ENCODE measurements at regions of chr2 and their contacts with region 1.

Region 1: GRCh38 chr2:136384531-136385303 is 266.8 kb upstream of the CXCR4 start:
- DNase-seq: peak; percentile 82
- ATAC-seq: peak; percentile 50
- H3K4me3 ChIP-seq: no peak overlapping the region
- H3K4me3 Mint-ChIP-seq: peak overlapping the region; percentile 44
- H3K27ac ChIP-seq: peak overlapping the region in 1 of 2 donors; percentile 11
- H3K27ac Mint-ChIP-seq: peak overlapping the region; percentile 76
- H3K4me1 ChIP-seq: peaks cover 30 to 42% of the 10 kb centered on the region in 2 donors
- H3K4me1 Mint-ChIP-seq: peaks cover 55% of the 10 kb centered on the region
- H3K27me3 ChIP-seq: no peaks in the 10 kb centered on the region
- H3K27me3 Mint-ChIP-seq: no peaks in the 10 kb centered on the region
- CTCF ChIP-seq: peak; percentile 87

Region 2: DNA sequence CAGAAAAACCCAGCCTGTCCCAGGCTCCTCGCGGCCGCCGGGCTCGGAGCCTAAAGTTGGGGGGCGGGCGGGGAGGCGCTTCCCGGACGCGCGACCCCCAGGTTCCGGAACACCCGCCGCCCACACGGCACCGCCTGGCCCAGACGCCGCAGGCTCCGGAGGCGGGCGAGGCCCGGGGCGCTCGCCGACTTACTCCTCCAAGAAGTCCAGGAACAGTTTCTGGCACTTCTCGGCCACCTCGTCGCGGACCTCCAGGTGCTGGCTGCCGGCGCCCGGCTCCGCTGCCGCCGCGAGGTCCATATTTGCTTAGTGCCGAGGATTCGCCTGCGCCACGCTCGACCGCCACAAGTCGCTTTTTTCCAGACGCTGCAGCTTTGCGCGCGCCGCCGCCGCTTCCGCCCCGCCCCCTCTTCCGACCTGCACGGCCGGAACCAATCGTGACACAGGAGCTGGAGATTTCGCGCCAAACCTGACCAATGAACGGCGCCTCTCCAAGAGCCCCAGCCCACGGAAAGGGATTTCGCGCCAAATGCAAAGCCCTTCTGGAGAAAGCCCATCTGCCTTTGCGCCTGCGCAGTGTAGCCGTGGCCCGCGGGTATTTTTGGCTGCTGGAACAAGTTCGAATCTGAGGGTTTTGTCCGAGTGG is 508.5 kb before region 1 on chr2 and contains the start of gene MCM6:
- CTCF ChIA-PET with region 1: interaction called, 3 read pairs
- POLR2A ChIA-PET with region 1: no interaction called
- intact Hi-C with region 1: loop called (anchors 1 kb)
- DNase-seq: peak; percentile 96
- ATAC-seq: peak; percentile 92
- H3K4me3 ChIP-seq: peak within 1 kb of the TSS; percentile 68 to 80 (median 76)
- H3K4me3 Mint-ChIP-seq: peak within 1 kb of the TSS; percentile 95
- H3K27ac ChIP-seq: peak within 1 kb of the TSS; percentile 69 to 79
- H3K27ac Mint-ChIP-seq: peak within 1 kb of the TSS; percentile 94
- H3K4me1 ChIP-seq: peaks cover 8 to 23% of the 10 kb centered on the region in 2 donors
- H3K4me1 Mint-ChIP-seq: peaks cover 24% of the 10 kb centered on the region
- H3K27me3 ChIP-seq: no peaks in the 10 kb centered on the region
- H3K27me3 Mint-ChIP-seq: no peaks in the 10 kb centered on the region
- CTCF ChIP-seq: no peak
- total RNA-seq, gene MCM6: 29.6 and 30.0 TPM in 2 replicates

Region 3: GRCh38 chr2:135985018-135985825 is 399.5 kb before region 1 on chr2 and contains the start of gene DARS1:
- CTCF ChIA-PET with region 1: interaction called, 15 read pairs
- POLR2A ChIA-PET with region 1: interaction called, 7 read pairs
- intact Hi-C with region 1: loop called (anchors 2 kb)
- DNase-seq: peak; percentile 91
- ATAC-seq: peak; percentile 84
- H3K4me3 ChIP-seq: peak within 1 kb of the TSS; percentile 75 to 99 (median 93)
- H3K4me3 Mint-ChIP-seq: peak within 1 kb of the TSS; percentile 97
- H3K27ac ChIP-seq: peak within 1 kb of the TSS; percentile 94 to 97
- H3K27ac Mint-ChIP-seq: peak within 1 kb of the TSS; percentile 98
- H3K4me1 ChIP-seq: peaks cover 29 to 31% of the 10 kb centered on the region in 2 donors
- H3K4me1 Mint-ChIP-seq: peaks cover 50% of the 10 kb centered on the region
- H3K27me3 ChIP-seq: no peaks in the 10 kb centered on the region
- H3K27me3 Mint-ChIP-seq: no peaks in the 10 kb centered on the region
- CTCF ChIP-seq: no peak
- total RNA-seq, gene DARS1: 88.3 and 92.0 TPM in 2 replicates

Region 4: GRCh38 chr2:136025057-136025973 is 359.4 kb before region 1 on chr2:
- CTCF ChIA-PET with region 1: no interaction called
- POLR2A ChIA-PET with region 1: no interaction called
- intact Hi-C with region 1: no loop called
- DNase-seq: peak; percentile 52
- ATAC-seq: peak; percentile 76
- H3K4me3 ChIP-seq: peak overlapping the region in 1 of 5 experiments; percentile 16
- H3K4me3 Mint-ChIP-seq: peak overlapping the region; percentile 27
- H3K27ac ChIP-seq: no peak overlapping the region
- H3K27ac Mint-ChIP-seq: no peak overlapping the region
- H3K4me1 ChIP-seq: peaks cover 5 to 11% of the 10 kb centered on the region in 2 donors
- H3K4me1 Mint-ChIP-seq: peaks cover 24% of the 10 kb centered on the region
- H3K27me3 ChIP-seq: no peaks in the 10 kb centered on the region
- H3K27me3 Mint-ChIP-seq: no peaks in the 10 kb centered on the region
- CTCF ChIP-seq: no peak

Region 5: DNA sequence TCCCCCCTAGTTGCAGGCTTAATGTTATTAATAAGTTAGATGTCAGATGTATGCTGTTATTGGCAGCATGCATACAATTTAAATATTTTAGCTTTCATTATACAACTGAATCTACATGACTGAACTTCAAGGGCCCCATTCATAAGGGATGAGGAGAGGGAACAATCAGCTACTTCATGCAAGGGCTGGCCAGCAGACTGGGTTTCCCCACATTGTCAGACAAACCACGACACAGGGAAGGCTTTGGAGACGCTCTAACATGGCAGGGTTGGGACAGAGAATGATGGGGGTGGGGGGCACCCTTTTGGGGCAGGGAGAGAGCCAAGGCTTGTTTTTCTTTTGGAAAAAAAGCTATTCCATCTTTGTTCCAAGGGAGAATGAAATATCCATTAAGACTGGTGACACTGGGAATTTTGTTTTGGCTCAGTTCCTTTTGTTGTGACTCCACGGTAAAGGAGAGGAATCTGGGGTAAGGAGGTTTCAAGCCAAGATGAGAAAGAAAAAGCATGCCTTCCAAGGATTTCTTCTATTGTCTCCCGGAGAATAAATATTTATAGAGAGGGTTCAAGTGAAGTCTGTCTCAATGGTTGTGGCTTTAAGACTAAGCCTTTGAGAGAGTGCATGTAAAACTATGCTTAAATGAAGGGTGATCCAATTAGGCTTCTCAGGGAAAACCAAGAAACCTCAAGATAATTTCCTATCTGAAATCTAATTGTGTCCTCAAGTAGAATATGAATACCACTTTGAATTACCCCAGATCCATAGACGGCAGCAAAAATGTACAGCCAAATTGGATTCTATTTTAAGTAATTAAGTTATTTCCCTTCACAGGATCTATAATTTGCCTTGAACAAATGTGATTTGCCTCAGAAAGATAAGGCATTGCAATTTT is 272.2 kb before region 1 on chr2:
- CTCF ChIA-PET with region 1: interaction called, 17 read pairs
- POLR2A ChIA-PET with region 1: interaction called, 47 read pairs
- intact Hi-C with region 1: no loop called
- DNase-seq: peak; percentile 48
- ATAC-seq: no peak
- H3K4me3 ChIP-seq: no peak overlapping the region
- H3K4me3 Mint-ChIP-seq: peak overlapping the region; percentile 98
- H3K27ac ChIP-seq: no peak overlapping the region
- H3K27ac Mint-ChIP-seq: peak overlapping the region; percentile 69
- H3K4me1 ChIP-seq: peaks cover 70 to 72% of the 10 kb centered on the region in 2 donors
- H3K4me1 Mint-ChIP-seq: peaks cover 74% of the 10 kb centered on the region
- H3K27me3 ChIP-seq: no peaks in the 10 kb centered on the region
- H3K27me3 Mint-ChIP-seq: no peaks in the 10 kb centered on the region
- CTCF ChIP-seq: no peak

Region 6: GRCh38 chr2:136135921-136136906 is 248.5 kb before region 1 on chr2:
- CTCF ChIA-PET with region 1: interaction called, 13 read pairs
- POLR2A ChIA-PET with region 1: interaction called, 40 read pairs
- intact Hi-C with region 1: loop called (anchors 1 kb)
- DNase-seq: peak; percentile 94
- ATAC-seq: peak; percentile 50
- H3K4me3 ChIP-seq: peak overlapping the region in 3 of 5 experiments; percentile 10 to 33 (median 10)
- H3K4me3 Mint-ChIP-seq: peak overlapping the region; percentile 83
- H3K27ac ChIP-seq: peak overlapping the region; percentile 98 to 99
- H3K27ac Mint-ChIP-seq: peak overlapping the region; percentile 96
- H3K4me1 ChIP-seq: peaks cover 94 to 98% of the 10 kb centered on the region in 2 donors
- H3K4me1 Mint-ChIP-seq: peaks cover 92% of the 10 kb centered on the region
- H3K27me3 ChIP-seq: no peaks in the 10 kb centered on the region
- H3K27me3 Mint-ChIP-seq: no peaks in the 10 kb centered on the region
- CTCF ChIP-seq: no peak

Region 7: GRCh38 chr2:136238286-136239078 is 146.2 kb before region 1 on chr2:
- CTCF ChIA-PET with region 1: interaction called, 169 read pairs
- POLR2A ChIA-PET with region 1: interaction called, 33 read pairs
- intact Hi-C with region 1: loop called (anchors 1 kb)
- DNase-seq: peak; percentile 93
- ATAC-seq: peak; percentile 70
- H3K4me3 ChIP-seq: peak overlapping the region in 1 of 5 experiments; percentile 17
- H3K4me3 Mint-ChIP-seq: peak overlapping the region; percentile 23
- H3K27ac ChIP-seq: peak overlapping the region; percentile 98
- H3K27ac Mint-ChIP-seq: peak overlapping the region; percentile 87
- H3K4me1 ChIP-seq: peaks cover 66 to 74% of the 10 kb centered on the region in 2 donors
- H3K4me1 Mint-ChIP-seq: peaks cover 85% of the 10 kb centered on the region
- H3K27me3 ChIP-seq: no peaks in the 10 kb centered on the region
- H3K27me3 Mint-ChIP-seq: no peaks in the 10 kb centered on the region
- CTCF ChIP-seq: no peak

Measured in B cell (primary cell).